Naive thymus-derived CD4-positive, alpha-beta T cell (primary cell): ENCODE measurements at regions of chr11 and their contacts with region 1.

Region 1: GRCh38 chr11:130314750-130315285 is at the start of gene ZBTB44:
- DNase-seq: peak; percentile 77 to 91 (median 85)
- ATAC-seq: peak; percentile 94
- H3K4me3 ChIP-seq: peak within 1 kb of the TSS; percentile 68
- H3K4me3 Mint-ChIP-seq: peak within 1 kb of the TSS; percentile 90 to 99 (median 96)
- H3K27ac ChIP-seq: peak within 1 kb of the TSS; percentile 89
- H3K27ac Mint-ChIP-seq: peak within 1 kb of the TSS; percentile 93 to 99 (median 98)
- H3K4me1 ChIP-seq: peaks cover 8 to 16% of the 10 kb centered on the region in 2 donors
- H3K4me1 Mint-ChIP-seq: peaks cover 33 to 54% (median 40%) of the 10 kb centered on the region in 7 donors
- H3K27me3 ChIP-seq: no peaks in the 10 kb centered on the region
- H3K27me3 Mint-ChIP-seq: peaks cover 0 to 6% (median 0%) of the 10 kb centered on the region in 5 donors
- total RNA-seq, gene ZBTB44: 45.3 to 83.4 (median 53.5) TPM

Region 2: GRCh38 chr11:129695575-129696308 is 619.1 kb before region 1 on chr11:
- CTCF ChIA-PET with region 1: no interaction called
- POLR2A ChIA-PET with region 1: no interaction called
- intact Hi-C with region 1: loop called in 1 of 2 experiments (anchors 5 kb)
- DNase-seq: peak; percentile 43 to 75 (median 68)
- ATAC-seq: peak; percentile 88
- H3K4me3 ChIP-seq: peak overlapping the region; percentile 72
- H3K4me3 Mint-ChIP-seq: peak overlapping the region; percentile 71 to 89 (median 85)
- H3K27ac ChIP-seq: peak overlapping the region; percentile 58
- H3K27ac Mint-ChIP-seq: peak overlapping the region in 6 of 9 donors; percentile 12 to 83 (median 22)
- H3K4me1 ChIP-seq: peaks cover 0 to 6% of the 10 kb centered on the region in 2 donors
- H3K4me1 Mint-ChIP-seq: peaks cover 0 to 12% (median 5%) of the 10 kb centered on the region in 7 donors
- H3K27me3 ChIP-seq: no peaks in the 10 kb centered on the region
- H3K27me3 Mint-ChIP-seq: peaks cover 0 to 10% (median 5%) of the 10 kb centered on the region in 5 donors

Region 3: GRCh38 chr11:130069684-130070108 is 245.1 kb before region 1 on chr11 and contains the start of gene APLP2:
- CTCF ChIA-PET with region 1: no interaction called
- POLR2A ChIA-PET with region 1: no interaction called
- intact Hi-C with region 1: loop called (anchors 1 kb)
- DNase-seq: peak; percentile 93 to 98 (median 95)
- ATAC-seq: peak; percentile 96
- H3K4me3 ChIP-seq: peak within 1 kb of the TSS; percentile 87
- H3K4me3 Mint-ChIP-seq: peak within 1 kb of the TSS; percentile 94 to 99 (median 96)
- H3K27ac ChIP-seq: peak within 1 kb of the TSS; percentile 89
- H3K27ac Mint-ChIP-seq: peak within 1 kb of the TSS; percentile 92 to 97 (median 95)
- H3K4me1 ChIP-seq: peaks cover 3 to 5% of the 10 kb centered on the region in 2 donors
- H3K4me1 Mint-ChIP-seq: peaks cover 19 to 33% (median 21%) of the 10 kb centered on the region in 7 donors
- H3K27me3 ChIP-seq: peaks cover 0 to 3% of the 10 kb centered on the region in 2 donors
- H3K27me3 Mint-ChIP-seq: peaks cover 0 to 29% (median 0%) of the 10 kb centered on the region in 5 donors
- total RNA-seq, gene APLP2: 26.6 to 172 (median 51.5) TPM

Region 4: DNA sequence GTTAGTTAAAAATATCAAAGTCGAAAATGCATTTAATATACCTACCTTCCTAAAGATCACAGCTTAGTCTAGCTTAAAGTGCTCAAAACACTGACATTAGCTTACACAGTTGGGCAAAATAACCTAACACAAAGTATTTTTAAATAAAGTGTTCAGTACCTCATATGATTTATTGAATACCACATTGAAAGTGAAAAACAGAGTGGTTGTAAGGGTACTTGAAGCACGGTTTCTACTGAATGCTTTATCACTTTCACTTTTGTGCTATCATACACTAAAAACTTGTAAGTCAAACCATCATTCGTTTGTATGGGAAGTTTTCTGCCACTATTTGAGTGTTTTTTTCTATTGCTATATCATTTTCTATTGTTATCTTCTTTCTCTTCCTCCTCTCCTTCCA is 36.7 kb before region 1 on chr11:
- CTCF ChIA-PET with region 1: no interaction called
- POLR2A ChIA-PET with region 1: no interaction called
- intact Hi-C with region 1: loop called in 1 of 2 experiments (anchors 5 kb)
- DNase-seq: no peak
- ATAC-seq: no peak
- H3K4me3 ChIP-seq: no peak overlapping the region
- H3K4me3 Mint-ChIP-seq: peak overlapping the region in 1 of 10 donors; percentile 38
- H3K27ac ChIP-seq: no peak overlapping the region
- H3K27ac Mint-ChIP-seq: no peak overlapping the region
- H3K4me1 ChIP-seq: no peaks in the 10 kb centered on the region
- H3K4me1 Mint-ChIP-seq: peaks cover 4 to 32% (median 17%) of the 10 kb centered on the region in 7 donors
- H3K27me3 ChIP-seq: no peaks in the 10 kb centered on the region
- H3K27me3 Mint-ChIP-seq: no peaks in the 10 kb centered on the region

Region 5: GRCh38 chr11:130389335-130389935 is 74.6 kb after region 1 on chr11:
- CTCF ChIA-PET with region 1: no interaction called
- POLR2A ChIA-PET with region 1: no interaction called
- intact Hi-C with region 1: loop called (anchors 2 to 5 kb)
- DNase-seq: peak in 3 of 9 donors; percentile 4 to 16 (median 12)
- ATAC-seq: peak; percentile 69
- H3K4me3 ChIP-seq: peak overlapping the region; percentile 43
- H3K4me3 Mint-ChIP-seq: peak overlapping the region in 9 of 10 donors; percentile 80 to 88 (median 85)
- H3K27ac ChIP-seq: no peak overlapping the region
- H3K27ac Mint-ChIP-seq: peak overlapping the region in 8 of 9 donors; percentile 14 to 95 (median 77)
- H3K4me1 ChIP-seq: peaks cover 7 to 22% of the 10 kb centered on the region in 2 donors
- H3K4me1 Mint-ChIP-seq: peaks cover 11 to 39% (median 22%) of the 10 kb centered on the region in 7 donors
- H3K27me3 ChIP-seq: no peaks in the 10 kb centered on the region
- H3K27me3 Mint-ChIP-seq: peaks cover 0 to 4% (median 0%) of the 10 kb centered on the region in 5 donors